ENCODE measurements at regions of chr12 and their contacts with region 1.

Region 1: DNA sequence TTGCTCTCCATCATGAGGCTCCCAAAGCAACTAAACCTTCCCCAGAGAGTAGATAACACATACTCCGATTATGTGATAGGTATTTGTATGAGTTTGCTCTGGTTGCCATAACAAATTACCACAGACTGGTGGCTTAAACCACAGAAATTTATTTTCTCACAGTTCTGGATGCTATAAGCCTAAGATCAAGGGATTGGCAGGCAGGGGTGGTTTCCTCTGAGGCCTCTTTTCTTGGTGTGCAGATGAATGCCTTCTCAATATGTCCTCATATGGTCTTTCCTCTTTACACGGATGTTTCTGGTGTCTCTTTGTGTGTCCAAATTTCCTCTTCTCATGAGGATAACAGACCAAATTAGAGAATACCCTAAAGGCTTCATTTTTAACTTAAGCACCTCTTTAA is 285.8 kb upstream of the GRIP1 start:
- DNase-seq: peak; percentile 54
- H3K4me3 Mint-ChIP-seq: no peak overlapping the region
- H3K27ac Mint-ChIP-seq: no peak overlapping the region
- H3K4me1 Mint-ChIP-seq: peaks cover 27% of the 10 kb centered on the region
- H3K27me3 Mint-ChIP-seq: no peaks in the 10 kb centered on the region

Region 2: DNA sequence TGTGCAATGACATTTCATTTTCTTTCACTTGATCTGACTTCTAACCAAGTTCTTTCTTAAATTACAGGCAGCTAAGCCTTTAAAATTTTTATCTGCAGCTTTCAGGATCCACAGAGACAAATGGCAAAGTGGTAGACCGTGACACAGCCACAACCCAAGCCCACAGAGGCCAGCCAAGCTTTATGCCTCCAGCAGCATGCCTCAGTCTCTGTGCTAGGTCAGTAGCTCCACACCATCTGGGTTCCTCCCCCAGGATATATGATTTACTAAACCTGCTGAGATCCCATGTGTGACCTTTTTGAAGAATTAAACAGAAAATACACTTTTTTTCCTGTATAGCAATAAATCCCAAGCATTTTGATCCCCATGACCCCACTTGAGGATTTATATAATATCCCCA is 14.2 kb after region 1 on chr12:
- CTCF ChIA-PET with region 1: no interaction called
- POLR2A ChIA-PET with region 1: no interaction called
- intact Hi-C with region 1: loop called (anchors 2 kb)
- DNase-seq: peak; percentile 16
- H3K4me3 Mint-ChIP-seq: no peak overlapping the region
- H3K27ac Mint-ChIP-seq: no peak overlapping the region
- H3K4me1 Mint-ChIP-seq: peaks cover 9% of the 10 kb centered on the region
- H3K27me3 Mint-ChIP-seq: peaks cover 23% of the 10 kb centered on the region

Measured in activated CD4-positive, alpha-beta memory T cell treated with anti-CD3 and anti-CD28 coated beads for 36 hours (primary cell).